ENCODE measurements at regions of chr18 and their contacts with region 1.

Region 1: GRCh38 chr18:50356036-50356945 is 18.6 kb upstream of the SKA1 start:
- DNase-seq: peak; percentile 30
- H3K4me3 ChIP-seq: no peak overlapping the region
- H3K27ac ChIP-seq: no peak overlapping the region
- H3K4me1 ChIP-seq: peaks cover 4% of the 10 kb centered on the region
- H3K27me3 ChIP-seq: peaks cover 10 to 14% of the 10 kb centered on the region in 2 experiments
- CTCF ChIP-seq: peak in 1 of 2 donors; percentile 4
- POLR2A ChIP-seq: no peak

Region 2: GRCh38 chr18:50009773-50010335 is 346.4 kb before region 1 on chr18:
- CTCF ChIA-PET with region 1: interaction called, 19 read pairs
- POLR2A ChIA-PET with region 1: no interaction called
- dilution Hi-C with region 1: no loop called
- intact Hi-C with region 1: no loop called
- DNase-seq: peak; percentile 40
- H3K4me3 ChIP-seq: no peak overlapping the region
- H3K27ac ChIP-seq: no peak overlapping the region
- H3K4me1 ChIP-seq: no peaks in the 10 kb centered on the region
- H3K27me3 ChIP-seq: peaks cover 2% of the 10 kb centered on the region in 2 experiments
- CTCF ChIP-seq: peak; percentile 58 to 63
- POLR2A ChIP-seq: no peak

Region 3: GRCh38 chr18:50218432-50219197 is 137.7 kb before region 1 on chr18:
- CTCF ChIA-PET with region 1: interaction called, 199 read pairs
- POLR2A ChIA-PET with region 1: no interaction called
- dilution Hi-C with region 1: no loop called
- intact Hi-C with region 1: loop called (anchors 1 kb)
- DNase-seq: peak; percentile 20
- H3K4me3 ChIP-seq: no peak overlapping the region
- H3K27ac ChIP-seq: no peak overlapping the region
- H3K4me1 ChIP-seq: no peaks in the 10 kb centered on the region
- H3K27me3 ChIP-seq: no peaks in the 10 kb centered on the region
- CTCF ChIP-seq: peak in 1 of 2 donors; percentile 41
- POLR2A ChIP-seq: no peak

Region 4: DNA sequence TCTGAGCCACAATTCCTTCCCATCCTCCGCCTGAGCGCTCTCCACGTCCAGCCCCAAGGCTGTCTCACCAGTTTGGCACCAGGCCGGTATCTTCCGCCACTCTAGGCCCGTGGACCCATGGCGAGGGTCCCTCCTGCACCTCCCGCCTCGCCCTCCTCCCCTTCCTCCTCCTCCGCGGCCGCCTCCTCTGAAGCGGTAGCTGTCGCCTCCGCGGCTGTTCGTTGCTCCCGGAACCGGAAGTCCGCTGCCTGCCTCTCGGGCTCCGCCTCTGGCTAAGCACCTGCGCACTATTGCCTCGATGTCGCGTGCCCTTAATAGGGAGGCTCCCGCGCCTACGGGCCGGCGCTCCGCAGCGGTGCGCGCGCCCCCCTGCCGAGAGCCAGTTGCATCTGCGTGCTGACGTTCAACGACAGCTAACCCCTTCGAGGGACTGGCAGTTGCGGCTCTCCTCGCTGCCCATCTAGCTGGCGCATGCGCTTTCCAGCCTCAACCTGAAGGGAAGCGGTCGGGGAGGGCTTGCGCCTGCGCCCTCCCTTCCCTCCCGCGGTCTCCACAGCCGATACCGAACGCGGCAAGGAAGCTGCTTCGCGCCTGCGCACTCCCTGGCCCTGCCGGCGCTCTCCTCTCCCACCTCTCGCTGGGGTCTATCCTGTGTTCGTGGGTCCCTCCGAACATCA is 74.9 kb before region 1 on chr18 and contains the start of gene MBD1:
- CTCF ChIA-PET with region 1: interaction called, 14 read pairs
- POLR2A ChIA-PET with region 1: no interaction called
- dilution Hi-C with region 1: no loop called
- intact Hi-C with region 1: no loop called
- DNase-seq: peak; percentile 99
- H3K4me3 ChIP-seq: peak within 1 kb of the TSS; percentile 79 to 89 (median 84)
- H3K27ac ChIP-seq: peak within 1 kb of the TSS; percentile 60
- H3K4me1 ChIP-seq: peaks cover 25% of the 10 kb centered on the region
- H3K27me3 ChIP-seq: no peaks in the 10 kb centered on the region
- CTCF ChIP-seq: peak in 1 of 2 donors; percentile 26
- POLR2A ChIP-seq: peak; percentile 89
- total RNA-seq, gene MBD1: 77.5 and 78.6 TPM in 2 replicates

Region 5: DNA sequence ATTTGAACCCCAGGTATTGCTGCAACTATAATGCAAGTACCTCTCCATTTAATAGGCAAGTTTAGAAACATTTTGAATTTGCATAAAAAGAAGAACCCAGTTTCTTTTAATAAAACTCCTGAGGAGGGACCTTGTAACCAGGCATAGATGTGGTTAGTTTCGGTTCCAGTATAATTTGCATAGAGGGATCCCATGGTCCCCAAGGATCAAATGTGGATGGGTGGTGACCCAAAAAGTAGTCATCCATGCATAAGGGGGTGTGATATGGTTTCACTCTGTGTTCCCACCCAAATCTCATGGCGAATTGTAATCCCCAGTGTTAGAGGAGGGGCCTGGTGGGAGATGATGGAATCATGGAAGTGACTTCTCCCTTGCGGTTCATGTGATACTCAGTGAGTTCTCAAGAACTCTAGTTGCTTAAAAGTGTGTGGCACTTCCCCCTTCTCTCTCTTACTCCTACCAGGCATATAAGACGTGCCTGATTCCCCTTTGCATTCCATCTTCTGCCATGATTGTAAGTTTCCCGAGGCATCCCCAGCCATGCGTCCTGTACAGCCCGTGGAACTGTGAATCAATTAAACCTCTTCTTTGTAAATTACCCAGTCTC is 21.6 kb before region 1 on chr18:
- CTCF ChIA-PET with region 1: interaction called, 12 read pairs
- POLR2A ChIA-PET with region 1: no interaction called
- dilution Hi-C with region 1: no loop called
- intact Hi-C with region 1: no loop called
- DNase-seq: no peak
- H3K4me3 ChIP-seq: no peak overlapping the region
- H3K27ac ChIP-seq: no peak overlapping the region
- H3K4me1 ChIP-seq: no peaks in the 10 kb centered on the region
- H3K27me3 ChIP-seq: peaks cover 2 to 3% of the 10 kb centered on the region in 2 experiments
- CTCF ChIP-seq: no peak
- POLR2A ChIP-seq: no peak

Region 6: GRCh38 chr18:50429207-50429948 is 73.1 kb after region 1 on chr18:
- CTCF ChIA-PET with region 1: interaction called, 20 read pairs
- POLR2A ChIA-PET with region 1: no interaction called
- dilution Hi-C with region 1: no loop called
- intact Hi-C with region 1: loop called (anchors 5 kb)
- DNase-seq: peak; percentile 29
- H3K4me3 ChIP-seq: no peak overlapping the region
- H3K27ac ChIP-seq: no peak overlapping the region
- H3K4me1 ChIP-seq: no peaks in the 10 kb centered on the region
- H3K27me3 ChIP-seq: peaks cover 2 to 4% of the 10 kb centered on the region in 2 experiments
- CTCF ChIP-seq: peak; percentile 28 to 29
- POLR2A ChIP-seq: no peak

Region 7: GRCh38 chr18:50441016-50441415 is 84.7 kb after region 1 on chr18:
- CTCF ChIA-PET with region 1: no interaction called
- POLR2A ChIA-PET with region 1: no interaction called
- dilution Hi-C with region 1: no loop called
- intact Hi-C with region 1: no loop called
- DNase-seq: no peak
- H3K4me3 ChIP-seq: no peak overlapping the region
- H3K27ac ChIP-seq: no peak overlapping the region
- H3K4me1 ChIP-seq: no peaks in the 10 kb centered on the region
- H3K27me3 ChIP-seq: no peaks in the 10 kb centered on the region
- CTCF ChIP-seq: no peak
- POLR2A ChIP-seq: no peak

Region 8: GRCh38 chr18:50902797-50903196 is 546.5 kb after region 1 on chr18:
- CTCF ChIA-PET with region 1: no interaction called
- POLR2A ChIA-PET with region 1: no interaction called
- dilution Hi-C with region 1: no loop called
- intact Hi-C with region 1: no loop called
- DNase-seq: no peak
- H3K4me3 ChIP-seq: no peak overlapping the region
- H3K27ac ChIP-seq: no peak overlapping the region
- H3K4me1 ChIP-seq: no peaks in the 10 kb centered on the region
- H3K27me3 ChIP-seq: no peaks in the 10 kb centered on the region
- CTCF ChIP-seq: no peak
- POLR2A ChIP-seq: no peak

Region 9: DNA sequence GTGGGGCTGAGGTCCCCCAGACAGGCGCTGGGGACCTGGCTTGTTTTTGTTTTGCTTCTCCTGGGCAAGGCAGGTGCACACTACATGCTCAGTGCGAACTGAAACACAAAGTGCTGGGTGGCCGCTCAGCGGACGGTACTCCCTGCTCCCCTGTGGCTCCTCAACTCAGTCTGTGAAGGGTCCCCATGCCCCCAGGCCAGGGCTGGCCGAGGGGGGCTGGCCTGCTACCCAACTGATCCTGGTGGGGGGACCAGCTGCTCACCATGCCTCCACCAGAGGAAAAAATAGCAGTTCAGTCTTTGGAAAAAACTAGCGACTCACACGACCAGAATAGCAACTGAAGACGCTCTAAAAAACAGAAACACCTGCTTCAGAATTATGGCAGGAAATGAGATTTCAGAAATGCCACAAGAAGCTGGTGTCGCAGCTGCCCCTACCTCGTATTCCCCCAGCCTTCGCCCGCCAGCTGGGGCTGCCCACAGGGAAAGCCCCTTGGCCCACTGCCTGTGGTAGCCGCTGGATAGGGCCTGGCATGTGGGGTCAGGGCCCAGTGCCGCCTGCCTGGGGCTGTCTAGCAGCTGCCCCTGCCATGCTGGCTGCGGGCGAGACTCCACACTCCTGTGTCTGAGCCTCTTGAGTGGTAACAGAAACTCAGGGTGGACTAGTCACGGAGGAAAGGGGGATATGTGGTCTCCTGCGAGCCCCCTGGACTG is 797.5 kb after region 1 on chr18:
- CTCF ChIA-PET with region 1: no interaction called
- POLR2A ChIA-PET with region 1: no interaction called
- dilution Hi-C with region 1: no loop called
- intact Hi-C with region 1: no loop called
- DNase-seq: no peak
- H3K4me3 ChIP-seq: no peak overlapping the region
- H3K27ac ChIP-seq: no peak overlapping the region
- H3K4me1 ChIP-seq: no peaks in the 10 kb centered on the region
- H3K27me3 ChIP-seq: no peaks in the 10 kb centered on the region
- CTCF ChIP-seq: no peak
- POLR2A ChIP-seq: no peak

Measured in endothelial cell of umbilical vein (primary cell).